ENCODE measurements at regions of chr3 and their contacts with region 1.

Region 1: GRCh38 chr3:11335056-11335608 is 62.9 kb downstream of the ATG7 start:
- DNase-seq: peak; percentile 28
- H3K4me3 ChIP-seq: no peak overlapping the region
- CTCF ChIP-seq: peak; percentile 45

Region 2: DNA sequence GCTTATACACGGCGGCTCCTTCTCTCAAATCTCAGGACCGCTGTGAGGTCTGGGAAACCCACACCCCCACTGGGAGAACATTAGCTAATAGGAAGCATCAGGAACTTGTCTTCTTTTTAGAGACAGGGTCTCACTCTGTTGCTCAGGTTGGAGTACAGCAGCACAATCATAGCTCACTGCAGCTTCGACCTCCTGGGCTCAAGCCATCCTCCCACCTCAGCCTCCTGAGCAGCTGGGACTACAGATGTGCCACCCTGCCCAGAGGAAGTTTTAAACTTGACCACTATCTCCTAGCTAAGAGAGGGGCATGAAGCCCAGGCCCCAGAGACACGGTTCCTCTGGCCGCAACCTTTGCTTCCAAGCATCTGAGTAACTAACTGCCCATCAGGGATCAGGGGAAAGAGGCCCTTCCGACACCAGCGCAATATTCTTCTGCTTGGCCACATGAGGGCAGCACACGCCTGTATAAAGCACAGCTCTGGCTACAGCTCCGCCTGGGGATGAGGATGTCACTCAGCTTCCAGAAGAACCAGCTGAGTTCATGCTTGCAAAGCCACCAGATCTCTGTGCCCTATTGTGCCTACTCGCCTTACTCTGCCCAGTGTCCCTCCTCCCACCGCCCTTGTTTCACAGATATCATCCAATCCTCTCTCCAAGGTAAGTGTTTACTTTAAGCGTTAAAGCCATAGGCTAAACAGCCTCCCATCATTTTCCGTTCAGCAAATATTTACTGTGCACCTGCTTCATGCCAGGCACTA is 576.6 kb before region 1 on chr3:
- CTCF ChIA-PET with region 1: interaction called, 11 read pairs
- POLR2A ChIA-PET with region 1: no interaction called
- DNase-seq: peak; percentile 24
- H3K4me3 ChIP-seq: no peak overlapping the region
- CTCF ChIP-seq: peak; percentile 77

Region 3: GRCh38 chr3:11211531-11212298 is 123.4 kb before region 1 on chr3:
- CTCF ChIA-PET with region 1: interaction called, 19 read pairs
- POLR2A ChIA-PET with region 1: no interaction called
- DNase-seq: no peak
- H3K4me3 ChIP-seq: peak overlapping the region; percentile 13; the same call in 1 of the 2 replicates
- CTCF ChIP-seq: peak; percentile 36

Region 4: DNA sequence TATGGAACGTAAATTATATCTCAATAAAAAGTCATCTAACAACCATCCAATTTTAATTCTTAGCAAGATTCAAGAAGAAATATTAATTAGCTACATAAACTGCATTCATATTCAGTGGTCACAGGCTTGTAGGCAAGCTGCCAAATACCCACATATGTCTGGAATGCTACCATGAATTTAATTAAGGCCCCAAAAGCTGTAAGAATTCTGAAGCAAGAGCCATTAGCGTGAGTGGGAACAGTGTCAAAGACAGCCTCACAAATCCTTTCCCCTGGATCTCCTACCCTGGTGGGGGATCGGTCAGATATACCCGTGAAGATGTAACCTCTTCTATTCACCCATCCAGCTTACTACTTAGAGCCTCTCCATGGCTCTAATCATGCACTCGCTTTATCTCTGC is 23.0 kb before region 1 on chr3:
- CTCF ChIA-PET with region 1: interaction called, 20 read pairs
- POLR2A ChIA-PET with region 1: no interaction called
- DNase-seq: no peak
- H3K4me3 ChIP-seq: no peak overlapping the region
- CTCF ChIP-seq: no peak

Region 5: GRCh38 chr3:11323813-11324212 is 11.3 kb before region 1 on chr3:
- CTCF ChIA-PET with region 1: interaction called, 22 read pairs
- POLR2A ChIA-PET with region 1: no interaction called
- DNase-seq: no peak
- H3K4me3 ChIP-seq: no peak overlapping the region
- CTCF ChIP-seq: no peak

Region 6: GRCh38 chr3:11570789-11571495 is 235.8 kb after region 1 on chr3:
- CTCF ChIA-PET with region 1: no interaction called
- POLR2A ChIA-PET with region 1: no interaction called
- DNase-seq: no peak
- H3K4me3 ChIP-seq: no peak overlapping the region
- CTCF ChIP-seq: no peak

Region 7: GRCh38 chr3:11637901-11638458 is 302.8 kb after region 1 on chr3:
- CTCF ChIA-PET with region 1: no interaction called
- POLR2A ChIA-PET with region 1: no interaction called
- DNase-seq: peak; percentile 73
- H3K4me3 ChIP-seq: peak overlapping the region; percentile 93
- CTCF ChIP-seq: no peak

Region 8: GRCh38 chr3:11651900-11652299 is 316.8 kb after region 1 on chr3:
- CTCF ChIA-PET with region 1: interaction called, 13 read pairs
- POLR2A ChIA-PET with region 1: no interaction called
- DNase-seq: no peak
- H3K4me3 ChIP-seq: no peak overlapping the region
- CTCF ChIP-seq: peak; percentile 0

Measured in AG04449 (cell line).